Naive thymus-derived CD4-positive, alpha-beta T cell (primary cell): ENCODE measurements at regions of chrX and their contacts with region 1.

Region 1: GRCh38 chrX:71068049-71068763 is at the start of gene SNX12:
- DNase-seq: peak; percentile 66 to 93 (median 88)
- ATAC-seq: peak; percentile 99
- H3K4me3 ChIP-seq: peak within 1 kb of the TSS; percentile 81
- H3K4me3 Mint-ChIP-seq: peak within 1 kb of the TSS; percentile 76 to 98 (median 94)
- H3K27ac ChIP-seq: peak within 1 kb of the TSS; percentile 86
- H3K27ac Mint-ChIP-seq: peak within 1 kb of the TSS; percentile 90 to 98 (median 97)
- H3K4me1 ChIP-seq: peaks cover 0 to 4% of the 10 kb centered on the region in 2 donors
- H3K4me1 Mint-ChIP-seq: peaks cover 9 to 24% (median 18%) of the 10 kb centered on the region in 7 donors
- H3K27me3 ChIP-seq: no peaks in the 10 kb centered on the region
- H3K27me3 Mint-ChIP-seq: peaks cover 0 to 12% (median 0%) of the 10 kb centered on the region in 5 donors
- total RNA-seq, gene SNX12: 19.0 to 41.6 (median 37.3) TPM

Region 2: DNA sequence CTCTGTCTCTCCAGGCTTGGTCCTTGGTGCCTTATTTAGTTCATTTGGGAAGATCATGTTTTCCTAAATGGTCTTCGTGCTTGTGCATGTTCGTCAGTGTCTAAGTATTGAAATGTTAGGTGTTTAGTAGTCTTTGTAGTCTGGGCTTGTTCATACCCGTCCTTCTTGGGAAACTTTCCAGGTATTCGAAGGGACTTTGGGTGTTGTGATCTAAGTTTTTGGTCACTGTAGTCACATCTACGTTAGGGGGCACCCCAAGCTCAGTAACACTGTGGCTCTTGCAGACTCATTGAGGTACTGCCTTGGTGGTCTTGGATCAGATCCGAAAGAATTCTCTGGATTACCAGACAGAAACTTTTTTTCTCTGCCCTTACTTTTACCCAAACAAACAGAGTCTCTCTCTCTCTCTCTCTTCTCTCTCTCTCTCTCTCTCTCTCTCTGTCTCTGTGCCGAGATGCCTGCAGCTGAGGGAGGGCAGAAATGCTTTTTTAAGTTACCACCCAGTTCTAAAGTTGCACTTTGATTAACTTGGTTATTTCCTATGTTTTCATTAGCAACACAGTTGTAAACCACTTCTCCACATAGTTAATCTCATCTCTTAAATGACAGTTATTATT is 69.7 kb before region 1 on chrX:
- CTCF ChIA-PET with region 1: no interaction called
- POLR2A ChIA-PET with region 1: no interaction called
- intact Hi-C with region 1: loop called in 1 of 2 experiments (anchors 5 kb)
- DNase-seq: peak in 4 of 9 donors; percentile 2 to 27 (median 20)
- ATAC-seq: no peak
- H3K4me3 ChIP-seq: no peak overlapping the region
- H3K4me3 Mint-ChIP-seq: peak overlapping the region in 1 of 10 donors; percentile 40
- H3K27ac ChIP-seq: no peak overlapping the region
- H3K27ac Mint-ChIP-seq: peak overlapping the region in 1 of 9 donors; percentile 56
- H3K4me1 ChIP-seq: peaks cover 0 to 7% of the 10 kb centered on the region in 2 donors
- H3K4me1 Mint-ChIP-seq: peaks cover 2 to 22% (median 19%) of the 10 kb centered on the region in 7 donors
- H3K27me3 ChIP-seq: no peaks in the 10 kb centered on the region
- H3K27me3 Mint-ChIP-seq: peaks cover 0 to 18% (median 0%) of the 10 kb centered on the region in 5 donors

Region 3: GRCh38 chrX:71095543-71095911 is 27.3 kb after region 1 on chrX and contains the start of gene FOXO4:
- CTCF ChIA-PET with region 1: no interaction called
- POLR2A ChIA-PET with region 1: interaction called, 7 read pairs
- intact Hi-C with region 1: loop called (anchors 1 kb)
- DNase-seq: peak; percentile 69 to 91 (median 82)
- ATAC-seq: peak; percentile 92
- H3K4me3 ChIP-seq: peak within 1 kb of the TSS; percentile 70
- H3K4me3 Mint-ChIP-seq: peak within 1 kb of the TSS; percentile 90 to 100 (median 96)
- H3K27ac ChIP-seq: peak within 1 kb of the TSS; percentile 85
- H3K27ac Mint-ChIP-seq: peak within 1 kb of the TSS; percentile 91 to 97 (median 95)
- H3K4me1 ChIP-seq: peaks cover 20 to 21% of the 10 kb centered on the region in 2 donors
- H3K4me1 Mint-ChIP-seq: peaks cover 11 to 40% (median 32%) of the 10 kb centered on the region in 7 donors
- H3K27me3 ChIP-seq: no peaks in the 10 kb centered on the region
- H3K27me3 Mint-ChIP-seq: peaks cover 0 to 6% (median 0%) of the 10 kb centered on the region in 5 donors
- total RNA-seq, gene FOXO4: 11.9 to 40.6 (median 30.0) TPM

Region 4: DNA sequence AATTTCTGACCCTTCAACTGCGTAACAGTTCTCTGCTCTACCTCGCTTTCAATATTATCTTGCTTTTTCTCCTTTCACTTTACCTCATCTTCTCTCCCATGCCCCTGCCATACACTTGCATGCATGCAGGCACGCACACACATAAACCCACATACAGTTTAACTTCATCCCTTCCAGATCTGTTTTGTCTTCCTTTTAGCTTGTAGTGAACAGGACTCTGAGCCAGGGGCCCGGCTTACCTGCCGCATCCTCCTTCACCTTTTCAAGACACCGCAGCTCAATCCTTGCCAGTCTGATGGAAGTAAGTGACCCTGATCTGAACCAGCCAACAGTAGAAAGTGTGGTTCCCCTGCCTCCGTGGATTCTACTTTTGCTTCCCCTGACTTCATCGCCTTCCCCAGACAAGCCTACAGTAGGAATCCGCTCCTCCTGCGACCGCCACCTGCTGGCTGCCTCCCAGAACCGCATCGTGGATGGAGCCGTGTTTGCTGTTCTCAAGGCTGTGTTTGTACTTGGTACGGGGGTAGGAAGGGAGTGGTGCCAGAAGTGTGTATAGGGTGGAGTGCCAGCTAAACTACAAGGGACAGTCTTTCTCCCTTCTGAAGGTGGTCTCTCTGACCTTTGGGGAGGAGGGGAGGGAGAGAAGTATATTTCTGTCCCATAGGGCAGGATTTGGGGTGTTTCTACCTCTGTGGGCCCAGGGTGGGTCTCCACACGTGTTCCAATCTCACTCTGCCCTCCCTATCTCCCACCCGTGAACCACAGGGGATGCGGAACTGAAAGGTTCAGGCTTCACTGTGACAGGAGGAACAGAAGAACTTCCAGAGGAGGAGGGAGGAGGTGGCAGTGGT is 60.9 kb after region 1 on chrX:
- CTCF ChIA-PET with region 1: no interaction called
- POLR2A ChIA-PET with region 1: interaction called, 3 read pairs
- intact Hi-C with region 1: loop called in 1 of 2 experiments (anchors 1 kb)
- DNase-seq: peak; percentile 52 to 81 (median 71)
- ATAC-seq: peak; percentile 95
- H3K4me3 ChIP-seq: no peak overlapping the region
- H3K4me3 Mint-ChIP-seq: peak overlapping the region; percentile 5 to 76 (median 51)
- H3K27ac ChIP-seq: peak overlapping the region; percentile 48
- H3K27ac Mint-ChIP-seq: peak overlapping the region; percentile 53 to 88 (median 78)
- H3K4me1 ChIP-seq: peaks cover 0 to 14% of the 10 kb centered on the region in 2 donors
- H3K4me1 Mint-ChIP-seq: peaks cover 12 to 28% (median 15%) of the 10 kb centered on the region in 7 donors
- H3K27me3 ChIP-seq: no peaks in the 10 kb centered on the region
- H3K27me3 Mint-ChIP-seq: no peaks in the 10 kb centered on the region

Region 5: GRCh38 chrX:71283403-71284143 is 215.4 kb after region 1 on chrX and contains the start of gene NONO:
- CTCF ChIA-PET with region 1: no interaction called
- POLR2A ChIA-PET with region 1: interaction called, 8 read pairs
- intact Hi-C with region 1: loop called (anchors 1 kb)
- DNase-seq: peak; percentile 48 to 96 (median 89)
- ATAC-seq: peak; percentile 91
- H3K4me3 ChIP-seq: peak within 1 kb of the TSS; percentile 88
- H3K4me3 Mint-ChIP-seq: peak within 1 kb of the TSS; percentile 94 to 99 (median 98)
- H3K27ac ChIP-seq: peak within 1 kb of the TSS; percentile 93
- H3K27ac Mint-ChIP-seq: peak within 1 kb of the TSS; percentile 97 to 100 (median 99)
- H3K4me1 ChIP-seq: peaks cover 0 to 8% of the 10 kb centered on the region in 2 donors
- H3K4me1 Mint-ChIP-seq: peaks cover under 1 to 28% (median 17%) of the 10 kb centered on the region in 7 donors
- H3K27me3 ChIP-seq: no peaks in the 10 kb centered on the region
- H3K27me3 Mint-ChIP-seq: peaks cover 0 to 3% (median 0%) of the 10 kb centered on the region in 5 donors
- total RNA-seq, gene NONO: 334 to 488 (median 371) TPM

Region 6: GRCh38 chrX:72269671-72270251 is 1201.6 kb after region 1 on chrX:
- CTCF ChIA-PET with region 1: no interaction called
- POLR2A ChIA-PET with region 1: no interaction called
- intact Hi-C with region 1: loop called in 1 of 2 experiments (anchors 10 kb)
- DNase-seq: no peak
- ATAC-seq: no peak
- H3K4me3 ChIP-seq: no peak overlapping the region
- H3K4me3 Mint-ChIP-seq: no peak overlapping the region
- H3K27ac ChIP-seq: no peak overlapping the region
- H3K27ac Mint-ChIP-seq: peak overlapping the region in 3 of 9 donors; percentile 33 to 78 (median 38)
- H3K4me1 ChIP-seq: peaks cover 6 to 17% of the 10 kb centered on the region in 2 donors
- H3K4me1 Mint-ChIP-seq: peaks cover 10 to 41% (median 24%) of the 10 kb centered on the region in 7 donors
- H3K27me3 ChIP-seq: no peaks in the 10 kb centered on the region
- H3K27me3 Mint-ChIP-seq: no peaks in the 10 kb centered on the region